ENCODE measurements at regions of chr19 and their contacts with region 1.

Region 1: GRCh38 chr19:46030812-46031550 is 8.1 kb upstream of the PGLYRP1 start:
- DNase-seq: no peak
- ATAC-seq: no peak
- H3K4me3 ChIP-seq: no peak overlapping the region
- H3K27ac ChIP-seq: no peak overlapping the region
- H3K4me1 ChIP-seq: peaks cover 0 to 10% (median 0%) of the 10 kb centered on the region in 9 donors
- H3K27me3 ChIP-seq: peaks cover 0 to 60% (median 31%) of the 10 kb centered on the region in 7 donors
- CTCF ChIP-seq: no peak

Region 2: DNA sequence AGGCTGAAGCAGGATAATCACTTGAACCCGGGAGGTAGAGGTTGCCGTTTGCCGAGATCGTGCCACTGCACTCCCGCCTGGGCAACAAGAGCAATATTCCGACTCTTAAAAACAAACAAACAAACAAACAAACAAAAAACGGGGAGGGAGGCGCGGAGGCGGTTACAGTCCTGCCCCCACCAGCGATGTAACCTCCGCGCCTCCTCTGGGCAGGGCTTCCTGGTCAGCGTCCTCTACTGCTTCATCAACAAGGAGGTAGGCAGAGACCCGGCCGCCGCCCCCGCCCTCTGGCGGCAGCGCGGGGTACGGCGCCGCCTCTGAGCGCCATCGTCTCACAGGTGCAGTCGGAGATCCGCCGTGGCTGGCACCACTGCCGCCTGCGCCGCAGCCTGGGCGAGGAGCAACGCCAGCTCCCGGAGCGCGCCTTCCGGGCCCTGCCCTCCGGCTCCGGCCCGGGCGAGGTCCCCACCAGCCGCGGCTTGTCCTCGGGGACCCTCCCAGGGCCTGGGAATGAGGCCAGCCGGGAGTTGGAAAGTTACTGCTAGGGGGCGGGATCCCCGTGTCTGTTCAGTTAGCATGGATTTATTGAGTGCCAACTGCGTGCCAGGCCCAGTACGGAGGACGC is 349.5 kb before region 1 on chr19:
- intact Hi-C with region 1: no loop called
- DNase-seq: peak; percentile 68 to 84
- ATAC-seq: peak; percentile 81 to 90 (median 88)
- H3K4me3 ChIP-seq: peak overlapping the region in 9 of 10 donors; percentile 14 to 55 (median 49)
- H3K27ac ChIP-seq: peak overlapping the region in 9 of 10 donors; percentile 39 to 75 (median 70)
- H3K4me1 ChIP-seq: peaks cover 0 to 28% (median 21%) of the 10 kb centered on the region in 9 donors
- H3K27me3 ChIP-seq: peaks cover 8 to 40% (median 26%) of the 10 kb centered on the region in 7 donors
- CTCF ChIP-seq: peak; percentile 90 to 99 (median 96)

Region 3: DNA sequence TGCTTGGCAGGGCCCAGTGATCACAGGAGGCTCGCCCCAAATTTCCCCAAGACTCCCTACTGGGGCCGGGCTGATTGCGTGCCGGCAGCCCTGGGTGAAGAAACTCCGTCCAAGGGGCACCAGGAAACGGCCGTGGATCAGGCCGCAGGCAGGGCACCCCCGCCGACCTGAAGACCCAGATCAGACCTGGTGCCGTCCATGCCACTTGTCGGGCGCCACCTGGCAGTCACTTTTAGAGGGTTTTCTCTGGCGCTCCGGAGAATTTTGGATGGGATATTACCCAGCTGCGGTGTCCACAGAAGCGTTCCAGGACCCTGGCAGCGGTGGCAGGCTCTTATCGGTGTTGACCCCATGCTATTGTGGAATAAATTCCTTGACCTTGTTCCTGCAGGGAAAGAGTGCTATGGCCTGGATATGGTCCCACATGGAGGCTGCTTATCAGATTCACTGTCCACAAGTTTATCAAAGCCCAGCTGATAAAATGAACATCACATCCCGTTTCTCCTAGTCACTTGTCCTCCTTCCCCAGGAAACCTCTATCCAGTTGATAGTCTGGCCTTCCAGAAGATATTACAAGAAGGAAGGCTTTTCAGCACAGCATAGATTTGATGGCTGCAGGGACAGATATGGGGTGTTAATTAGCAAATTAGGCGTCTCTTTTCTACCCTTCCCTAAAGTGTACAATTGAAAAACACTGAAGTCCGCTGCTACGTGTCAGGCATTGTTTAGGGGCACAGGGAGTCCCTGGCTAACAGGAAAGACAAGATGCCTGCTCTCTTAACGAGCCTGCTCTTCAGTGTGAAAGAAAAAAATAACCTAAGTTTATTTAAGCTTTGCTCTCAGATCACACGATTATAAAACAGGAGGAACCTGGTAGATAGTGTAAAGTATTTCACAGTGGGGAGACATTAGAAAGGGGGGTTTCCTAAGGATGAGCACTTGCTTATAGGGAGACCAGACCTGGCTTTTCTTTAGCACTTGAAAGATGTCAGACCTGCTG is 155.4 kb after region 1 on chr19:
- intact Hi-C with region 1: loop called in 5 of 10 experiments (anchors 5 kb)
- DNase-seq: no peak
- ATAC-seq: no peak
- H3K4me3 ChIP-seq: no peak overlapping the region
- H3K27ac ChIP-seq: no peak overlapping the region
- H3K4me1 ChIP-seq: no peaks in the 10 kb centered on the region
- H3K27me3 ChIP-seq: peaks cover 0 to 58% (median 33%) of the 10 kb centered on the region in 7 donors
- CTCF ChIP-seq: no peak

Region 4: DNA sequence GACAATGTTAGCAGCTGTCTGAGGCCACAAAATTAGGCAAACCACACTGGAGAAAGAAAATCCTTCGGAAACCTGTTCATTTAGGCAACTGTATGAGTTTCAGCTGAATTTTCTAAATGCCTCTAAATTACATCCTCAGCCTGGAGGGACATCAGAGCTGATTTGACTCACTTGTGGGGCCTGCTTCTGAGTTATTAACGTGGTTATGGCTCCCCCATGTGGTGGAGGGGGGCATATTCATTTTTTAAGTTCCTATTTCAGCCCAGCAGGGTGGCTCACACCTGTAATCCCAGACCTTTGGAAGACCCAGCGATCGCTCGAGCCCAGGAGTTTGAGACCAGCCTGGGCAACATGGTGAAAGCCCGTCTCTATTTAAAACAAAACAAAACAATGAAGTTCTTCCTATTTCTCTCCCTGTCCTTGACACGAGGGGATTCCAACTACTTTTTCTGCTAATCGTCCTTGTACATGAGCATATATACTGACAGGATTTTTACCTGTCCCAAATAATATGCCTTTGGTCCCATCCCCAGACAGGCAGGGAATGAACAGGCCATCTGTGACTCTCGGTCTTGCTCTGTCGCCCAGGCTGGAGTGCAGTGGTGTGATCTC is 234.3 kb after region 1 on chr19:
- intact Hi-C with region 1: loop called (anchors 1 to 5 kb)
- DNase-seq: peak in 1 of 2 donors; percentile 67
- ATAC-seq: peak; percentile 71 to 88 (median 78)
- H3K4me3 ChIP-seq: no peak overlapping the region
- H3K27ac ChIP-seq: no peak overlapping the region
- H3K4me1 ChIP-seq: no peaks in the 10 kb centered on the region
- H3K27me3 ChIP-seq: peaks cover 0 to 76% (median 40%) of the 10 kb centered on the region in 7 donors
- CTCF ChIP-seq: peak; percentile 63 to 87 (median 83)

Measured in heart right ventricle (tissue), 16 donors.